A673 (cell line): ENCODE measurements at regions of chr1 and their contacts with region 1.

Region 1: DNA sequence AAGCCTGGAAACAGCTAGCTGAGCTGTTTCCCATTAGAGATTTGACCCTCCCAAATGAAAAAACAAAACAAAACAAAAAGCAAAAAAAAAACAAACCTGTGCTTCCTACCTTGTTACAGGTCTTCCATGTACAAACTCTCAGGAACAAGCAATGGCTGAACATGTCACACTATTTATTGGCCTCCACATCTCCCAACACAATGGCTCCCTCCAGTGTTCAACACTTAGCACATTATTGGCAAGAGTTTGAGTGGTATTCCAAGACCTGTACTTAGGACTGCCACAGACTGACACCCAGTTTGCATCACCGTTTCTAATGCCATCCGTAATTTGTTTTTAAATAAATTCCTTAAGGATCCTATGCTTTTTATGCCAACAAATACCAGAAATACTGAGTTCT is 195.0 kb upstream of the OLFM3 start:
- DNase-seq: peak; percentile 88
- H3K4me3 ChIP-seq: no peak overlapping the region
- H3K27ac ChIP-seq: no peak overlapping the region
- H3K4me1 ChIP-seq: peaks cover 29% of the 10 kb centered on the region
- H3K27me3 ChIP-seq: no peaks in the 10 kb centered on the region
- CTCF ChIP-seq: peak; percentile 78

Region 2: DNA sequence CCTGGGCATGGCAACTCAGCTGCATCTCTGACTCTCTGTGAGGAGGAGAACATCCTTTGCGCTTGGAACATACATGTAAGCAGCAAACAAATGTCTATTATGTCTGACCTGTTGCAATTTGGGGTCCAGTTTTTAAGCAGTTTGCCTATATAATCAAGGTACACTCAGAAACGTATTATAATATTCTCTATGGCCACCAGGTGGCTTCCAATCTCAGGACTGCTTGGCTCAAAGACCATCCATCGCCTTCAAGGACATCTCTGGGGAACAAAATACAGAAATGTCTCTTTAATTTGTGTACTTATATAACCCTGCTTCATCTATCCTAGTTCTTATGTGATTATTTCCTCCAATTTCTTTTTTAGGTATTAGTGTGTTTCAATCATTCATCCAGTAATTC is 422.2 kb before region 1 on chr1:
- CTCF ChIA-PET with region 1: no interaction called
- POLR2A ChIA-PET with region 1: no interaction called
- intact Hi-C with region 1: loop called (anchors 5 kb)
- DNase-seq: peak; percentile 67
- H3K4me3 ChIP-seq: no peak overlapping the region
- H3K27ac ChIP-seq: no peak overlapping the region
- H3K4me1 ChIP-seq: peaks cover 8% of the 10 kb centered on the region
- H3K27me3 ChIP-seq: no peaks in the 10 kb centered on the region
- CTCF ChIP-seq: peak; percentile 71